ENCODE measurements at regions of chr1 and their contacts with region 1.

Region 1: GRCh38 chr1:41122851-41123507 is 101.5 kb upstream of the SLFNL1 start:
- DNase-seq: peak; percentile 91
- ATAC-seq: peak; percentile 96
- H3K4me3 ChIP-seq: no peak overlapping the region
- H3K27ac ChIP-seq: no peak overlapping the region
- H3K4me1 ChIP-seq: peaks cover 7% of the 10 kb centered on the region
- H3K27me3 ChIP-seq: no peaks in the 10 kb centered on the region
- CTCF ChIP-seq: peak; percentile 59
- POLR2A ChIP-seq: no peak
- RAD21 ChIP-seq: peak; percentile 56

Region 2: DNA sequence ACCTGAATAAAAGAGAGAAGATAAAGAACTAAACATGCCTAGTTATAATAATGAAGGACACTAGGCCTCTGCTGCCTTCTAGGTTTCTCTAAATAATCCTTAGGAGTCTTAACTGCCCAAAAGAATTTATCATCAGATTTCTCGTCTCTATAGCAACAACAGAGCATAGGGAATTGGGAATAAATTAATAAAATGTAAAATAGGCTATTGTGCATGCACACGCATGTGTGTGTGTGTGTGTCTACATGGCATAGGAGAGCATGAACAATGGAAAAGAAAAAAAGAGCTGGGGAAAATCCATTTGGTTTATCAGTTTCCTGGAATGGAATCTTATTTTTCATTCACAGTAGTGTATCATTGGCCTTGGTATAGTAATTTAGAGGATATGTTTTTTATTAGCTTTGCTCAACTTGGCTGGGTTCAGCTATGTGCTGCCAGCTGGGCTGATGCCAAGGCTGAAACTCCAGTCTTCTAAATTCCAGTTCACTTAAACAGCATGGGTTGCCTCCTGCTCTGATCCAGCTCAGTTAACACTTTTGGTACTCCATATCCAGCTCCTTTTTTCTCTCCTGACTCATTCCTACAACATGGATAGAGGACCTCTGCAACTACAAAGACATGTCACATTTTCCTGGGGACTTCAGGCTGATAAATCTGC is 20.9 kb before region 1 on chr1:
- CTCF ChIA-PET with region 1: interaction called, 10 read pairs
- POLR2A ChIA-PET with region 1: no interaction called
- dilution Hi-C with region 1: no loop called
- in situ Hi-C with region 1: no loop called
- intact Hi-C with region 1: no loop called
- DNase-seq: peak; percentile 97
- ATAC-seq: peak; percentile 95
- H3K4me3 ChIP-seq: no peak overlapping the region
- H3K27ac ChIP-seq: no peak overlapping the region; the same call in 1 of the 2 replicates
- H3K4me1 ChIP-seq: peaks cover 5% of the 10 kb centered on the region
- H3K27me3 ChIP-seq: no peaks in the 10 kb centered on the region
- CTCF ChIP-seq: no peak
- POLR2A ChIP-seq: no peak
- RAD21 ChIP-seq: no peak